Activated CD8-positive, alpha-beta T cell treated with anti-CD3 and anti-CD28 coated beads, Interleukin-2, amount 10 ng/mL, durations not matched to agents 7 days and 5 days (primary cell): ENCODE measurements at regions of chr4 and their contacts with region 1.

Region 1: DNA sequence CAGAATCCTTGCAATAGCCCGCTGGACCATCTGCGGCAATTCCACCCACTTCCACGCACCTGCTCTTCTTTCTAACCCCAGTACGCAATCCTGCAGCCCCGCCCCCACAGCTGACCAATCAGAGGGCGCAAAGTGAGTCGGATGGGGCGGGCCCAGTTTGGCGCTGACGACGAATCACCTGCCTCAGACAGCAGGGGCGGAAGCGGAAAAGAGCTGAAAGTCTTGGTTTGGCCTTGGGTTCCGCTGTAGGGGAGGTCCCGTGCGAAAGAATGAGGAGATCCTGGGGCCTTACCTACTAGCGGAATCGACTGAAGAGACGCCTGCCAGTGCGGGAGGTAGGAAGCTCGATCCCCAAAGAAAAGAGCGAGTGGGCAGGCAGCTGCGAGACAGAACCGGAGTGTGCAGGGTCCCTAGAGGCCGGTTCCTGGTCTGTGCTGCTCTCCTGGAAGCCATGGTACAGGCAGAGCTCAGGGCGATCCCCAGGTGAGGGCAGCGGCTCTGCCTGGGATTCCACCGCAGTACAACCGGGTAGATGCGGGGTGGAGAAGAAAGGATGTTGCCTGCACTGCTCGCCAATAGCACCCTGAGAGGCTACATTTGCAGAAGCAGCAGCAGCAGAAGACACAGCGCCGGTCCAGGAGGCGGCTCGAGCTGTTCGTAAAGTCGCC is at the start of gene TMEM184C:
- DNase-seq: peak; percentile 99
- ATAC-seq: peak; percentile 99
- H3K4me3 Mint-ChIP-seq: peak within 1 kb of the TSS; percentile 86
- H3K27ac Mint-ChIP-seq: peak within 1 kb of the TSS; percentile 94
- H3K4me1 Mint-ChIP-seq: peaks cover 22% of the 10 kb centered on the region
- H3K27me3 Mint-ChIP-seq: peaks cover 14% of the 10 kb centered on the region
- total RNA-seq, gene TMEM184C: 18.5 to 20.6 TPM

Region 2: DNA sequence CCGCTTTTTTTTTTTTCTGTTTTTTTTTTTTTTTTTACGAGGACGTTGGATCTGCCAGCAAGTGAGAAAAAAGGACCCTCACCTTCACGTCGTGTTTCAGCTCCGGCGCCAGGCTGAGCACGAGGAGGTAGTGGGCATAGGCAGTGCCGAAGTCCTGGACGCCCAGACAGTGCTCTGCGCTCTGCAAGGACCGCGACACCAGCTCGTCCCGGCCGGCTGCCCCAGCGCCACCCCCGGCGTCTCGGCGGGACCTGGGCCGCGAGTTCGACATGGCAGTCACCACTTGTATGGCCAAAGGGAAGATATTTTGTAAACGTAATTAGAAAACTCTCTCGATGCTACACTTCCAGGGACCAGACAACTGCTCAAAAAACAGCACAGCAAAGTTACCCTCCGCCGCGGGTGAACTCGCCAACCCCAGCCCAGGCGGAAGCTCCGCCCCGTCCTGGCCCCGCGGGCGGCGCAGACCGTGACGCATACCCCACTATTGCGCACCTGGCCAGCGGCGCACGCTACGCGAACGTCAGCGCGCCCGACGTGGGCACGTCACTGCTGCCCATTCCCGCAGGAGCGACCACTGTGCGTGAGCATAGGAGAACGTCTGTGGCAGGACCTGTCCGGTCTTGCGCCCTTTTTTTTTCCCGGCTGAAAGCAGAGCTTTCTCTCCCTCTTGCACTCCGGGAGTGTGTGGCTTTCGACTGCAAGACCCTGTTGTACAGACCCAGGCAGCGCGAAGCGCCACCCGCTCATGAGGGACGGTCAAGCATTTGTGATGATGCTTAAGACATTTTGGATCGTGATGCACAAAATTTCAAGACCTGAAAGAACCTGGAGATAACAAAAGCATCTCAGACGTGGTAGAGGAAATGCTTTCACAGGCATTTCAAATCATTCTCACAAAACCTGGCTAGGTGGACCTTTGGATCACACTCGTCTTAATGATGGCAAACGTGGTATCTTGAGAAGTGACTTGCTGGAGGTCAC is 66.7 kb after region 1 on chr4 and contains the start of gene PRMT9:
- CTCF ChIA-PET with region 1: interaction called, 18 read pairs
- POLR2A ChIA-PET with region 1: interaction called, 32 read pairs
- DNase-seq: peak; percentile 92
- ATAC-seq: peak; percentile 98
- H3K4me3 Mint-ChIP-seq: peak within 1 kb of the TSS; percentile 87
- H3K27ac Mint-ChIP-seq: peak within 1 kb of the TSS; percentile 95
- H3K4me1 Mint-ChIP-seq: peaks cover 47% of the 10 kb centered on the region
- H3K27me3 Mint-ChIP-seq: peaks cover 2% of the 10 kb centered on the region
- total RNA-seq, gene PRMT9: 12.5 to 13.4 TPM